ENCODE measurements at regions of chr4 and their contacts with region 1.

Region 1: GRCh38 chr4:112145326-112145819 is at the start of gene FAM241A:
- DNase-seq: peak; percentile 92
- H3K4me3 ChIP-seq: peak within 1 kb of the TSS; percentile 75
- H3K27ac ChIP-seq: peak within 1 kb of the TSS; percentile 44
- H3K4me1 ChIP-seq: peaks cover 40% of the 10 kb centered on the region
- CTCF ChIP-seq: no peak
- total RNA-seq, gene FAM241A: 2.1 and 2.5 TPM in 2 replicates

Region 2: GRCh38 chr4:112099701-112100297 is 45.6 kb before region 1 on chr4:
- CTCF ChIA-PET with region 1: no interaction called
- POLR2A ChIA-PET with region 1: interaction called, 3 read pairs
- intact Hi-C with region 1: loop called (anchors 2 kb)
- DNase-seq: peak; percentile 63
- H3K4me3 ChIP-seq: no peak overlapping the region
- H3K27ac ChIP-seq: no peak overlapping the region
- H3K4me1 ChIP-seq: no peaks in the 10 kb centered on the region
- CTCF ChIP-seq: peak; percentile 97

Region 3: DNA sequence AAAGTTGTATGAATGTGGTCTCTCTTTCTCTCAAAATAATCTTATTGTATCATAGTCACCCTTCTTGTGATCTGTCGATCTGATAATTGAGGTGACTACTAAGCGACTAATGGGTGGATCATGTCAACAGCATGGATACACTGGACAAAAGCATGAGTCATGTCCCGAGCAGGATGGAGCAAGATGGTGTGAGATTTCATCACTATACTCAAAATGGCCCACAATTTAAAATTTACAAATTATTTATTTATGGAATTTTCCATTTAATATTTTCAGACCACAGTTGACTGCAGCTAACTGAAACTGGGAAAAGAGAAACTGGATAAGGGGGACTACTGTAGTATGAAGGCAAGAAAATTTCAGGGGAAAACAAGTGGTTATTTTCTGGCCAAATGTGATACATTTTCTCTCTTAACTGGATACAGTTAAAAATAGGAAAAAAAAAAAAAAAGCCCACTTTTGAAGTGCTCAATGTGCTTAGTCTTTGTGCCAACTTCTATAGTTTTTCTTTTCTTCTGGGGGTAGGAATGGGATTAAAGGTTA is 25.1 kb after region 1 on chr4:
- CTCF ChIA-PET with region 1: interaction called, 3 read pairs
- POLR2A ChIA-PET with region 1: interaction called, 37 read pairs
- intact Hi-C with region 1: loop called (anchors 1 kb)
- DNase-seq: peak; percentile 38
- H3K4me3 ChIP-seq: peak overlapping the region; percentile 39
- H3K27ac ChIP-seq: peak overlapping the region; percentile 39
- H3K4me1 ChIP-seq: peaks cover 65% of the 10 kb centered on the region
- CTCF ChIP-seq: no peak

Region 4: DNA sequence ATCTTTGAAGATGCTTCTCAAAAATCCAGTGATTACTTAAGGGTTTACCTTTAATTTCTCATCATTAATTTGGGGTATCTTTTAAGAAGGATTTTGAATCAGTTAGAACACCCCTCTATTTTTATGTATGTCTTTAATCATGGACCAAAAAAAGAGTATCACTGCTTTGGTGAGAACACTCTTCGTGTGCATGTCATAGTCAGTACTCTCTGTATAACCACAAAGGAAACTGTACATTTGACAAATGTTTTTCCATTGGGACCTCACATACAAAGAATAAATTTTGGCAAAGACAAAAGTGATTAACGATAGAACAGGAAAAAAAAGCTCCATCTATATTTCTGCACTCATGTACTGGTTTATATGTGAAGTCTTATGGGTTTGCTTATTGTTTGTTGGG is 31.2 kb after region 1 on chr4:
- CTCF ChIA-PET with region 1: no interaction called
- POLR2A ChIA-PET with region 1: interaction called, 12 read pairs
- intact Hi-C with region 1: no loop called
- DNase-seq: no peak
- H3K4me3 ChIP-seq: no peak overlapping the region
- H3K27ac ChIP-seq: no peak overlapping the region
- H3K4me1 ChIP-seq: peaks cover 34% of the 10 kb centered on the region
- CTCF ChIP-seq: no peak

Measured in OCI-LY7 (cell line).